Thyroid gland (tissue), 4 donors: ENCODE measurements at regions of chr16 and their contacts with region 1.

Region 1: GRCh38 chr16:88569985-88570690 is at the start of gene ZC3H18:
- DNase-seq: peak; percentile 97 to 98
- H3K4me3 ChIP-seq: peak within 1 kb of the TSS; percentile 5 to 71 (median 48)
- H3K27ac ChIP-seq: peak within 1 kb of the TSS in 2 of 3 donors; percentile 68 to 69
- H3K4me1 ChIP-seq: peaks cover 13 to 16% of the 10 kb centered on the region in 2 donors
- H3K27me3 ChIP-seq: no peaks in the 10 kb centered on the region
- CTCF ChIP-seq: no peak
- POLR2A ChIP-seq: peak in 1 of 2 donors; percentile 77
- total RNA-seq, gene ZC3H18: 14.8 to 25.5 (median 20.9) TPM

Region 2: GRCh38 chr16:88650749-88651275 is 80.7 kb after region 1 on chr16 and contains the start of gene CYBA:
- intact Hi-C with region 1: loop called (anchors 10 kb)
- DNase-seq: peak; percentile 86 to 90
- H3K4me3 ChIP-seq: peak within 1 kb of the TSS; percentile 66 to 70 (median 68)
- H3K27ac ChIP-seq: peak within 1 kb of the TSS; percentile 58 to 83 (median 73)
- H3K4me1 ChIP-seq: peaks cover 17 to 19% of the 10 kb centered on the region in 2 donors
- H3K27me3 ChIP-seq: no peaks in the 10 kb centered on the region
- CTCF ChIP-seq: no peak
- POLR2A ChIP-seq: peak in 1 of 2 donors; percentile 53
- total RNA-seq, gene CYBA: 199 to 475 (median 339) TPM

Region 3: DNA sequence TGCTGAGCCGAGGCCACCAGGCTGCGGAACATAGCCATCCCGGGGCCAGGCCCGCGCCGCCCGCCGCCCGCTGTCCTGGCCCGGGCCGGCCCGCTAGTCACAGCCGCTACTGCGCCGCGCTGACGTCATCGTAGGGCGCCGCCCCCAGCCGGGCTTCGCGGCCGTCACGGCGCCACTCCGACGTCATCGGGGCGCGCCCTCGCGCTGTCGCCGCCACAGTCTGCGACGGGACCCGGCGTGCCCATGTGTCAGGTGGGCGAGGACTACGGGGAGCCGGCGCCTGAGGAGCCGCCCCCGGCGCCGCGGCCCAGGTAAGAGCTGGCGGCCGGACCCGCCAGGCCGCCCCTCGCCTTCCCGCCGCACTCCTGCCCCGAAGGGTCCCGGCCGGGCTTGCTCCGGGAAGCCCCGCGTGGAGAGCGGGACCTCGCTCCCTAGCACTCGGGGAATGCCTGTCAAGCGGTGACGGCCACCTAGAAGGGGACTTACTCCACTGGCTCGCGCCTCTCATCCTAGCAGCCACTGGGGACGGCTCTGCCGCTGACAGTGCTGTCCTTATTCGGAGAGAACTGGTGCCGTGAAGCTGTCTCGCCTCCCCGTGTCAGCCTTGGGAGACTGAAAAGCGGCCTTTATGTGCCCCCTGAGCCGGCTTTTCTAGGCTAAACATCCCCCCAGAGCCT is 136.3 kb after region 1 on chr16 and contains the starts of genes CTU2 and RNF166:
- intact Hi-C with region 1: loop called (anchors 2 kb)
- DNase-seq: peak; percentile 90 to 91
- H3K4me3 ChIP-seq: peak within 1 kb of the TSS; percentile 57 to 97 (median 66)
- H3K27ac ChIP-seq: peak within 1 kb of the TSS in 2 of 3 donors; percentile 74 to 76
- H3K4me1 ChIP-seq: peaks cover 17 to 43% of the 10 kb centered on the region in 2 donors
- H3K27me3 ChIP-seq: no peaks in the 10 kb centered on the region
- CTCF ChIP-seq: peak in 1 of 6 experiments; percentile 22
- POLR2A ChIP-seq: peak in 1 of 2 donors; percentile 84
- total RNA-seq, gene CTU2: 7.7 to 21.2 (median 13.6) TPM
- total RNA-seq, gene RNF166: 12.5 to 26.8 (median 19.1) TPM